Activated CD8-positive, alpha-beta memory T cell treated with anti-CD3 and anti-CD28 coated beads, Interleukin-2, amount 10 ng/mL, durations not matched to agents 7 days and 5 days (primary cell): ENCODE measurements at regions of chr9 and their contacts with region 1.

Region 1: GRCh38 chr9:93111371-93112115 is 15.5 kb downstream of the CARD19 start:
- DNase-seq: no peak
- ATAC-seq: no peak
- H3K4me3 Mint-ChIP-seq: no peak overlapping the region
- H3K27ac Mint-ChIP-seq: no peak overlapping the region
- H3K4me1 Mint-ChIP-seq: peaks cover 30% of the 10 kb centered on the region
- H3K27me3 Mint-ChIP-seq: no peaks in the 10 kb centered on the region

Region 2: GRCh38 chr9:92954049-92954861 is 157.3 kb before region 1 on chr9:
- CTCF ChIA-PET with region 1: interaction called, 11 read pairs
- DNase-seq: peak; percentile 94
- ATAC-seq: peak; percentile 84
- H3K4me3 Mint-ChIP-seq: peak overlapping the region; percentile 65
- H3K27ac Mint-ChIP-seq: peak overlapping the region; percentile 90
- H3K4me1 Mint-ChIP-seq: peaks cover 54% of the 10 kb centered on the region
- H3K27me3 Mint-ChIP-seq: no peaks in the 10 kb centered on the region

Region 3: GRCh38 chr9:93095205-93096130 is 16.1 kb before region 1 on chr9:
- CTCF ChIA-PET with region 1: interaction called, 52 read pairs
- DNase-seq: peak; percentile 100
- ATAC-seq: peak; percentile 82
- H3K4me3 Mint-ChIP-seq: peak overlapping the region; percentile 88
- H3K27ac Mint-ChIP-seq: peak overlapping the region; percentile 100
- H3K4me1 Mint-ChIP-seq: peaks cover 76% of the 10 kb centered on the region
- H3K27me3 Mint-ChIP-seq: no peaks in the 10 kb centered on the region

Region 4: DNA sequence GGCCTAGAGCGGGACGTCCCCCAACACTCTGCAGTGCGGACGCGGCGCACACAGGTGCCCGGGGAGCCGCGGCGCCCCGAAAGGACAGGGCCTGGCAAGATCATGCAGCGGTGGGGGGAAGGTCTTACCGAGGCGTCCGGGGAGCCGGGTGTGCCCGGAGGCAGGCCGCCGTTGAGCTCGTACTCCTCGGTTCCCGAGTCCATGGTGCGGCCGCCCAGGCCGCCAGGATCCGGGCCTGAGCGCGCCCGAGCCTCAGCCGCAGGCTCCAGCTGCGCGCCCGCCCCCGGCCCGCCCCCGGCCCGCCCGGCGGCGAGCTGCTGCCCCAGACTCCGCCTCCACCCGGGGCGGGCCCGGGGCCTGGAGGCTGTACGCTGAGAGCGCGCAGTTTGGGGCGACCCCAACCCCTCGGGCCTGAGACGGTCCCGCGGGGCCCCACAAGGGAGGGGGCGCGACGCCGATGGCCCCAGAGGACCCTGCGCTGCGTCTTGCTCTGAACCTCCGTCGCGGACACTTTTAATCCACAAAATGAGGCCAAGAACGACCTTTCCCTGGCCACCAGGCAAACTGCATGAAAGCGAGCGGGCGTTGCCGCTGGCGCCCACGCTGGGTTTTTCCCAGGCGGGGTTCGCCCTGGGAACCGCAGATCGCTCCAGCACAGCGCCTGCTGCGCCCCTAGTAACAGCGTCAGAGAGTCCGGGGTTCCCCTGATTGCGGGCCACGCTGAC is 22.6 kb after region 1 on chr9 and contains the start of gene NINJ1:
- CTCF ChIA-PET with region 1: interaction called, 14 read pairs
- DNase-seq: peak; percentile 81
- ATAC-seq: peak; percentile 92
- H3K4me3 Mint-ChIP-seq: peak within 1 kb of the TSS; percentile 82
- H3K27ac Mint-ChIP-seq: peak within 1 kb of the TSS; percentile 86
- H3K4me1 Mint-ChIP-seq: peaks cover 47% of the 10 kb centered on the region
- H3K27me3 Mint-ChIP-seq: no peaks in the 10 kb centered on the region
- total RNA-seq, gene NINJ1: 31.1 to 54.9 TPM

Region 5: GRCh38 chr9:93223260-93224180 is 112.0 kb after region 1 on chr9:
- CTCF ChIA-PET with region 1: no interaction called
- DNase-seq: no peak
- ATAC-seq: no peak
- H3K4me3 Mint-ChIP-seq: no peak overlapping the region
- H3K27ac Mint-ChIP-seq: no peak overlapping the region
- H3K4me1 Mint-ChIP-seq: no peaks in the 10 kb centered on the region
- H3K27me3 Mint-ChIP-seq: peaks cover 24% of the 10 kb centered on the region

Region 6: DNA sequence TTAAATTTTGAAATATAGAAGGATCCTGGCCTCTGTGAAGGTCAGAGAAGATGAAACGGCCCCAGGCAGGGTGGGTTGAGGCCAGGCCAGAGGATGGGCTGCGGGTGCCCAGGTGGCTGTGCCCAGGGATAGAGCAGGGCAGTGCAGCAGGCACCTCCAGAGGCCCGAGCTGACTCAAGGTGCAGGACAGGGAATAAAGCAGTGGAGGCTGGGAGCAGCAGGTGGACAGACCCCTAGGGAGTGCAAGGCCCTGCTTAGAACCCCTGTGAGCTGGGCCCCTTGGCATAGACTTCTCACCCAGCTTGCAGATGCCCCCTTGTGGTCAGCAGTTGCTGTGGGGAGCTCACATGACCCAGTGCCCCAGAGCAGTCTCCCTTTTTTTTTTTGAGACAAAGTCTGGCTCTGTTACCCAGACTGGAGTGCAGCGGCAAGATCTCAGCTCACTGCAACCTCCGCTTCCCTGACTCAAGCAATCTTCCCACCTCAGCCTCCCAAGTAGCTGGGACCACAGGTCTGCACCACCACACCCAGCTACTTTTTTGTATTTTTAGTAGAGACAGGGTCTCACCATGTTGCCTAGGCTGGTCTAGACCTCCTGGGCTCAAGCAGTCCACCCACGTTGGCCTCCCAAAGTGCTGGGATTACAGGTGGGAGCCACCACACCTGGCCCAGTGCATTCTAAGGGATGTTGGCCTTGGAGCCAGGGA is 191.2 kb after region 1 on chr9:
- CTCF ChIA-PET with region 1: interaction called, 16 read pairs
- DNase-seq: peak; percentile 70
- ATAC-seq: peak; percentile 73
- H3K4me3 Mint-ChIP-seq: no peak overlapping the region
- H3K27ac Mint-ChIP-seq: no peak overlapping the region
- H3K4me1 Mint-ChIP-seq: peaks cover 8% of the 10 kb centered on the region
- H3K27me3 Mint-ChIP-seq: no peaks in the 10 kb centered on the region

Region 7: GRCh38 chr9:93427655-93428379 is 316.3 kb after region 1 on chr9:
- CTCF ChIA-PET with region 1: no interaction called
- DNase-seq: no peak
- ATAC-seq: no peak
- H3K4me3 Mint-ChIP-seq: no peak overlapping the region
- H3K27ac Mint-ChIP-seq: no peak overlapping the region
- H3K4me1 Mint-ChIP-seq: peaks cover 3% of the 10 kb centered on the region
- H3K27me3 Mint-ChIP-seq: peaks cover 38% of the 10 kb centered on the region